ENCODE measurements at regions of chr5 and their contacts with region 1.

Region 1: DNA sequence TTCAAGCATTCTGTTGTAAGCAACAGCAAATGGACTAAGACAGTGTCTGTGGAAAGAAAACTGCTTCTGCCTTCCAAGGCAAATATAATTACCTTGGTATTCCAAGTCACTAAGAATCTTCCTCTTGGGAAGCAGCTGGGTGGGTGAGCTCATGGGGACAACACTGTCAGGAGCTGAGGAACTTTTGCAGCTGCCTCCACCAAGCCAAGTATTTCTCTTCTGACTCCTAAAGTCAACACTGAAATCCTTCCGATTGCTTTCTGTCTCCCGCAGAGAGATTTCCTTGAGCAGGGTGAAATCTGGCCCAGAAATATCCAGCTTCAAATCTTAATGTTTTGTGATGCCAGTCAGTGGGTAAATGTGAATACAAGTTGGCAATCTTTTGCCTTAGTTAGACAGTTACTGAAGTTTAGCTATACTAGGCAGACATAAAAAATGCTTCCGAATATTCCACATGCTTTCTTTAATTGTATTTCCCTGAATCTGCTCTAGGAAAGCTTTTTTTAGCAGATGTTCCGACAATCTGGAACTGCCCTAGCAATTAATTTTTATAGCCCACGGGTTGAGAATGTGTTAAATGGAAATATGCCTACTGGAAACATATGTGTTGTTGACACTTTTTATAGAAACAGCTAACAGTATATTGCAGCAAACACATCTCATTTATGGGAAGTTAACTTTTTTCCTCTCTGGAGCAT is 369.9 kb upstream of the DAB2 start:
- DNase-seq: no peak
- ATAC-seq: no peak
- H3K4me3 ChIP-seq: no peak overlapping the region
- H3K4me3 Mint-ChIP-seq: no peak overlapping the region
- H3K27ac ChIP-seq: no peak overlapping the region
- H3K27ac Mint-ChIP-seq: no peak overlapping the region
- H3K4me1 ChIP-seq: no peaks in the 10 kb centered on the region
- H3K4me1 Mint-ChIP-seq: no peaks in the 10 kb centered on the region
- H3K27me3 ChIP-seq: no peaks in the 10 kb centered on the region
- H3K27me3 Mint-ChIP-seq: no peaks in the 10 kb centered on the region
- CTCF ChIP-seq: no peak

Region 2: DNA sequence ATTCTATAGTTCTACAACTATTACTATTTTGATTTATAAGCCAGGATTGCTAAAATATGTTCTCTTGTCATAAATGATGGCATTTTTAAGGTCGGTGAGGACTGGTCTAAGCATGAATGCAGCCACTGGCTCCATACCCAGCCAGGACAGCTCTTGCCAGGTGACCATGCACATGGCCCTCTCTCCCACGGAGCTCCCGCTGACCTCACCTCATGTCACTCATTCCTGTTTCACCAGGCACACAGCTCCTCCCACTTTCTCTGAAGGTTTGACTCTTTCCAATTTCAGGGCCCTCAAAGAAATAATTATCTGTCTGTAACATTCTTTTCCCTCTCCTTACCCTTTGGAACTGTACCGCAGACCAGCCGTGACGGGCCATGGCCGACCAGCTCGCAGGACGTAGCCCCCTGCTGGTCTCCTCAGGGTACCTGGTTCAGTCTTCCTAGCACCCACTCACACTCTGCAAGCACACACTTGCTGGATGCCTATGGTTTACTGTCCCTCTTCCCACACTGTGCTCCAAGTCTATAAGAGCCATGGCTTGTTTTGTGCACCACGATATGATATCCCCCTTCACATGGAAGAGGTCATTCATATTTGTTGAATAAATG is 1310.8 kb before region 1 on chr5:
- CTCF ChIA-PET with region 1: no interaction called
- POLR2A ChIA-PET with region 1: no interaction called
- intact Hi-C with region 1: no loop called
- DNase-seq: no peak
- ATAC-seq: no peak
- H3K4me3 ChIP-seq: no peak overlapping the region
- H3K4me3 Mint-ChIP-seq: no peak overlapping the region
- H3K27ac ChIP-seq: no peak overlapping the region
- H3K27ac Mint-ChIP-seq: no peak overlapping the region
- H3K4me1 ChIP-seq: no peaks in the 10 kb centered on the region
- H3K4me1 Mint-ChIP-seq: no peaks in the 10 kb centered on the region
- H3K27me3 ChIP-seq: no peaks in the 10 kb centered on the region
- H3K27me3 Mint-ChIP-seq: peaks cover 34% of the 10 kb centered on the region
- CTCF ChIP-seq: no peak

Region 3: GRCh38 chr5:39826051-39826450 is 31.4 kb after region 1 on chr5:
- CTCF ChIA-PET with region 1: no interaction called
- POLR2A ChIA-PET with region 1: no interaction called
- intact Hi-C with region 1: loop called in 1 of 2 experiments (anchors 1 kb)
- DNase-seq: no peak
- ATAC-seq: no peak
- H3K4me3 ChIP-seq: no peak overlapping the region
- H3K4me3 Mint-ChIP-seq: no peak overlapping the region
- H3K27ac ChIP-seq: no peak overlapping the region
- H3K27ac Mint-ChIP-seq: no peak overlapping the region
- H3K4me1 ChIP-seq: no peaks in the 10 kb centered on the region
- H3K4me1 Mint-ChIP-seq: no peaks in the 10 kb centered on the region
- H3K27me3 ChIP-seq: no peaks in the 10 kb centered on the region
- H3K27me3 Mint-ChIP-seq: peaks cover under 1% of the 10 kb centered on the region
- CTCF ChIP-seq: no peak